Prostate gland (tissue), 2 donors: ENCODE measurements at regions of chrX and their contacts with region 1.

Region 1: GRCh38 chrX:109856974-109857373 is 123.9 kb upstream of the ACSL4 start:
- DNase-seq: no peak
- H3K4me3 ChIP-seq: no peak overlapping the region
- H3K27ac ChIP-seq: no peak overlapping the region
- H3K4me1 ChIP-seq: no peaks in the 10 kb centered on the region
- H3K27me3 ChIP-seq: no peaks in the 10 kb centered on the region
- CTCF ChIP-seq: peak; percentile 46 to 67 (median 62)
- POLR2A ChIP-seq: no peak

Region 2: GRCh38 chrX:109632906-109633504 is 224.0 kb before region 1 on chrX:
- intact Hi-C with region 1: no loop called
- DNase-seq: no peak
- H3K4me3 ChIP-seq: no peak overlapping the region
- H3K27ac ChIP-seq: no peak overlapping the region
- H3K4me1 ChIP-seq: no peaks in the 10 kb centered on the region
- H3K27me3 ChIP-seq: no peaks in the 10 kb centered on the region
- CTCF ChIP-seq: peak in 2 of 4 experiments; percentile 26 to 43
- POLR2A ChIP-seq: no peak

Region 3: DNA sequence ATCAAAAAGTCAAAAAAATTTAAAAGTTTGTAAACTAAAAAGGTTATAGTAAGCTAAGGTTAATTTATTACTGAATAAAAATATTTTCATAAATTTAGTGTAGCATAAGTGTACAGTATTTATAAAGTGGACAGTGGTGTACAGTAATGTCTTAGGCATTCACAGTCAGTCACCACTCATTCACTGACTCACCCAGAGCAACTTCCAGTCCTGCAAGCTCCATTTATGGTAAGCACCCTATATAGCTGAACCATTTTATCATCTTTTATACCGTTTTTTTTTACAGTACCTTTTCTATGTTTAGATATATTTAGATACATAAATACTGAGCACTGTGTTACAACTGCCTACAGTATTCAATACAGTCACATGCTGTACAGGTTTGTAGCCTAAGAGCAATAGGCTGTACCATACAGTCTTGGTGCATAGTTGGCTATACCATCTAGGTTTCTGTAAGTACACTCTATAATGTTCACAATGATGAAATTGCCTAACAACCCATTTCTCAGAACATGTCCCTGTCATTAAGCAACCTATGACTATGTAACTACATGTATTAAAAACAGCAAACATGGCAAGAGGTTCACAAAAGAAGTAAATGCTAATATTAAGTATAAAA is 142.5 kb before region 1 on chrX:
- intact Hi-C with region 1: loop called (anchors 10 kb)
- DNase-seq: no peak
- H3K4me3 ChIP-seq: no peak overlapping the region
- H3K27ac ChIP-seq: no peak overlapping the region
- H3K4me1 ChIP-seq: no peaks in the 10 kb centered on the region
- H3K27me3 ChIP-seq: no peaks in the 10 kb centered on the region
- CTCF ChIP-seq: no peak
- POLR2A ChIP-seq: no peak

Region 4: GRCh38 chrX:109774706-109775105 is 82.3 kb before region 1 on chrX:
- intact Hi-C with region 1: no loop called
- DNase-seq: no peak
- H3K4me3 ChIP-seq: no peak overlapping the region
- H3K27ac ChIP-seq: no peak overlapping the region
- H3K4me1 ChIP-seq: no peaks in the 10 kb centered on the region
- H3K27me3 ChIP-seq: no peaks in the 10 kb centered on the region
- CTCF ChIP-seq: no peak
- POLR2A ChIP-seq: no peak

Region 5: DNA sequence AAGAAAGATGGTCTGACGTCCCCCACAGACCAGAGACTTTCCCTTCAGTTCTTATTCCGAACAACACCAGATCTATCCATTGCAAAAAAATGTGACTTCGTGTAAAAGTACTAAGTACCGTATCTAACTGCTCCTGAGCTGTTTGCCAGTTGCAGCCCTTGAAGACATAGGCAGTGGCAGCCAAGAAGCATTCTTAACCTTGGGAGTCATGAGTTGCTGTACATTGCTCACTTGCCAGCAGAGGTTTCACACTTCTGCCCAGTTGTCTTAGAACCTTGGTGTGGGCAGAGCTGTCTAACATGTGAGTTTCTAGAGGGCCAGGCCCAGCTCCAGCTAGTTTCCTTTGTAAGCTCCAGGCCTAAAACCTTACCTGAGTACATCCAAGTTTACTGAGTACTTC is 949.2 kb after region 1 on chrX:
- intact Hi-C with region 1: no loop called
- DNase-seq: no peak
- H3K4me3 ChIP-seq: no peak overlapping the region
- H3K27ac ChIP-seq: no peak overlapping the region
- H3K4me1 ChIP-seq: no peaks in the 10 kb centered on the region
- H3K27me3 ChIP-seq: no peaks in the 10 kb centered on the region
- CTCF ChIP-seq: no peak
- POLR2A ChIP-seq: no peak